Ascending aorta (tissue), 2 donors: ENCODE measurements at regions of chr5 and their contacts with region 1.

Region 1: DNA sequence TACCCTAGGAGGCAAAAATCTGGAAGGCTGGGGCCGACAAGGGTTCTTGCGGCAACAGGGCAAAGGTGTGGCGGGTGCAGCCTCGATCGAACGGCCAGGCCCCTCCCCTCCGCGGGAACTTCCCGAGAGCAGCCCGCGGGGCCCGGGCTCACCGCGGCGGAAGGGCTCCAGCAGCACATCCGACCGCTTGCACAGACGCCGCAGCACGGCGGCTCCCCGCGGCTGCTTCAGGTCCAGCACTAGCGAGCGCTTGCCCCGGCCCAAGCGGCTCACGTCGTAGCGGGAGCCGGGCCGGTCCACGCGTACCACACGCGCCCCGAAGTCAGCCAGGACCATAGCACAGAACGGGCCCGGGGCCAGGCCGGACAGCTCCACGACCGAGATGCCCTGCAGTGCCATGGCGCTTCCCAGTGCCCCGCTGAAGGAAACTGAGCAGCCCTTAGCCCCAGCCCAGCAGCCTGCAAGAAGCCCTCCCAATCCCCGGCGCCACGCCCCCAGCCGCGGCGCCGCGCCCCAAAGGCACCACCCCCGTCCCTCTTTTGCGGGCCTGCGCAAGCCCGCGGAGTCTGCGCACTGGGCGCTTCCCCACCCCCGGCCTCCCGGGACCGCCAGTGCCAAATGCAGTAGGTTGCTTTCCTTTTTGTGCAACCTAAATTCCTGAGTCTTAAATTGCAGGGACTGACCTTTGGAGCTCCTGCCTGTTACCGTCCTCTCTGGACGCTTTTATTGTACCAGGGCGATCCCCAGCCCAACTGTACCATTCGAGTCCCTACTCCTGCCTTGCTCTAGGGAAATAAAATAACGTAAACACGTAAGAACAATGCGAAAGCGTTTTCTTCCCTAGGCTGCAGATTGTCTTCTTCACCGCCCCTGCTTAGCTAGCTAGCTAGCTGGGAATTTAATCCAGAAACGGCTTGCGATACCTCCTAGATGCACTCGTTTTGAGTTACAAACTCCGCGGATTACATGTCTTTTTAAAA is at the start of gene AMACR:
- DNase-seq: peak; percentile 66 to 97
- H3K4me3 ChIP-seq: peak within 1 kb of the TSS; percentile 73 to 77
- H3K27ac ChIP-seq: peak within 1 kb of the TSS; percentile 83 to 85
- H3K4me1 ChIP-seq: peaks cover 4 to 11% of the 10 kb centered on the region in 2 donors
- H3K27me3 ChIP-seq: no peaks in the 10 kb centered on the region
- CTCF ChIP-seq: no peak
- total RNA-seq, gene AMACR: 1.3 TPM

Region 2: GRCh38 chr5:34045996-34046395 is 38.1 kb after region 1 on chr5:
- intact Hi-C with region 1: loop called (anchors 2 kb)
- DNase-seq: no peak
- H3K4me3 ChIP-seq: no peak overlapping the region
- H3K27ac ChIP-seq: peak overlapping the region; percentile 44 to 68
- H3K4me1 ChIP-seq: peaks cover 7 to 24% of the 10 kb centered on the region in 2 donors
- H3K27me3 ChIP-seq: no peaks in the 10 kb centered on the region
- CTCF ChIP-seq: no peak

Region 3: GRCh38 chr5:34459908-34460307 is 452.0 kb after region 1 on chr5:
- intact Hi-C with region 1: loop called (anchors 10 kb)
- DNase-seq: no peak
- H3K4me3 ChIP-seq: no peak overlapping the region
- H3K27ac ChIP-seq: no peak overlapping the region
- H3K4me1 ChIP-seq: no peaks in the 10 kb centered on the region
- H3K27me3 ChIP-seq: no peaks in the 10 kb centered on the region
- CTCF ChIP-seq: no peak

Region 4: DNA sequence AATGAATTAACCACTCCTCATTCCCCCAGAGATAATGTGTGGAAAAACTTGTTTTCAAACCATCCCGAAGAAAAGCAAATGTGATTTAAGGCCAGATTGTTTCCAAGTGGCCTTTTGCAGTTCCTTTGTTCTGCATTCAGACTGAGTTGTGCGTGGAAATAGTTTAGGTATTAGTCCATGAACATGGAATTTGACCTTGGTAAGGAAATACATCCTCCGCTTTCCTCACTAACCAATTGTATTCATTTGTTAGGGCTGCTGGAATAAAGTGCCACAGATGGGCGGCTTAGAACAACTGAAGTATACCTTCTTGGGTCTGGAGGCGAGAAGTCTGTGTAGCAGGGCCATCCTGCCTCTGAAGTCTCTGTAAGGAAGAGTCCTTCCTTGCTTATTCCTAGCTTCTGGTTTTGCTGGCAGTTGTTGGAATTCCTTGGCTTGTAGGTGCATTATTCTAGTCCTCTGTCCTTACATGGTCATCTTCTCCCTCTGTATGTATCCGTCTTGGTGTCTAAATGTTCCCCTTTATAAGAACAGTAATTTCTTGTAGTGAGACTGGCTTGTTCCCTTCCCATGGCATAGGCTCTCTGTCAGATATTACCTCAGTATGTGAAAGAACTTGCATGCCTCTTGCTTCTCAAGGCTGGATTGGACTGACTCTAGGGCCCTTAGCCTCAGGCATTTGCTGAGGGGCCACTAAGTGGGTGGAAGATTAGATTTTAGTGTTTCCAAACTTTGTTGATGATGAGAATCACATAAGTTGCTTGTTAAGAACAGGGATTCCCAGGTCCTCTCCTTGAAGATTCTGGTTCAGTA is 702.2 kb after region 1 on chr5:
- intact Hi-C with region 1: no loop called
- DNase-seq: no peak
- H3K4me3 ChIP-seq: no peak overlapping the region
- H3K27ac ChIP-seq: peak overlapping the region; percentile 77 to 80
- H3K4me1 ChIP-seq: peaks cover 7 to 37% of the 10 kb centered on the region in 2 donors
- H3K27me3 ChIP-seq: no peaks in the 10 kb centered on the region
- CTCF ChIP-seq: no peak

Region 5: GRCh38 chr5:34929150-34929719 is 921.3 kb after region 1 on chr5 and contains the start of gene DNAJC21:
- intact Hi-C with region 1: loop called (anchors 5 kb)
- DNase-seq: peak; percentile 92 to 99
- H3K4me3 ChIP-seq: peak within 1 kb of the TSS; percentile 64 to 72
- H3K27ac ChIP-seq: peak within 1 kb of the TSS; percentile 87 to 98
- H3K4me1 ChIP-seq: peaks cover 0 to 15% of the 10 kb centered on the region in 2 donors
- H3K27me3 ChIP-seq: no peaks in the 10 kb centered on the region
- CTCF ChIP-seq: no peak
- total RNA-seq, gene DNAJC21: 30.5 TPM